BJ (cell line): ENCODE measurements at regions of chr22 and their contacts with region 1.

Region 1: GRCh38 chr22:26643418-26644100 is 13.8 kb upstream of the MIAT start:
- DNase-seq: no peak
- H3K4me3 ChIP-seq: no peak overlapping the region
- H3K27me3 ChIP-seq: peaks cover 8% of the 10 kb centered on the region
- CTCF ChIP-seq: no peak

Region 2: DNA sequence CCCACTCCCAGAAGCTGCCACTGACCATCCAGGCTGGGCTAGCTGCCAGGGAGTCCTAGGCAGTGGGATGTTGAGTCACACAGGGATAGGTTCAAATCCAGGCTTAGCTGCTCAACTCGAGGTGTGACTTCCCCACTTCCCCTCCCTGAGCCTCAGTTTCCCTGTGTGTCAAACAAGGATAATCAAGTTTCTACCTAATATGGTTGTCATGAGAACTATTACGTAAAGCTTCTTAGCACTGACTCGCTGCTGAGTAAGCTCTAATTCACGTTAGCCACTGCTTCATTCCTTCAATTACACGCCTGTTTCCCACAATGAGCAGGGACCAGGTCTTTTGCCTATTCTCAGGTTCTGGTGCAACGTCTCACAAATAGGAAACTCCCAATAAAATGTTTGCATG is 406.6 kb before region 1 on chr22:
- CTCF ChIA-PET with region 1: no interaction called
- POLR2A ChIA-PET with region 1: no interaction called
- DNase-seq: no peak
- H3K4me3 ChIP-seq: no peak overlapping the region
- H3K27me3 ChIP-seq: no peaks in the 10 kb centered on the region
- CTCF ChIP-seq: no peak

Region 3: DNA sequence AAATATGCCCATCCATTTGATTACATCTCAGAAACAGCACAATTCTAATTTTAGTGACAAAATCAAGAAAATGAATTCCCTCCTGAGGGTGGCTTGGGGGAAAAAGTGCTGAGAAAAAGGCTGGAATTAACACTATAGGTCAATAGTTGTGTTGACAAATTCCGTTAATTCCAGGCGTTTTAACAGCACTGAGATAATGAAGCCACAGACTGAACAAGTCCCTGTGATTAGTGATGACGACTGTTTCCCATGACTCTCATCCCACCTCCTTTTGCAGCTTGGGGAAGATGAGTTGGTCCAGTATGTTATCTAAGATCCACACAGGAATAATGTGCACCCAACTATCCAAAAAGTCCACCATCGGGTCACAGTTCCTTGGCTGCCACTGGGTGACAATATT is 147.1 kb before region 1 on chr22:
- CTCF ChIA-PET with region 1: interaction called, 4 read pairs
- POLR2A ChIA-PET with region 1: interaction called, 13 read pairs
- DNase-seq: no peak
- H3K4me3 ChIP-seq: no peak overlapping the region
- H3K27me3 ChIP-seq: no peaks in the 10 kb centered on the region
- CTCF ChIP-seq: no peak

Region 4: GRCh38 chr22:26629988-26630761 is 13.4 kb before region 1 on chr22:
- CTCF ChIA-PET with region 1: no interaction called
- POLR2A ChIA-PET with region 1: no interaction called
- DNase-seq: no peak
- H3K4me3 ChIP-seq: no peak overlapping the region
- H3K27me3 ChIP-seq: peaks cover 3% of the 10 kb centered on the region; the same call in 1 of the 2 replicates
- CTCF ChIP-seq: no peak

Region 5: DNA sequence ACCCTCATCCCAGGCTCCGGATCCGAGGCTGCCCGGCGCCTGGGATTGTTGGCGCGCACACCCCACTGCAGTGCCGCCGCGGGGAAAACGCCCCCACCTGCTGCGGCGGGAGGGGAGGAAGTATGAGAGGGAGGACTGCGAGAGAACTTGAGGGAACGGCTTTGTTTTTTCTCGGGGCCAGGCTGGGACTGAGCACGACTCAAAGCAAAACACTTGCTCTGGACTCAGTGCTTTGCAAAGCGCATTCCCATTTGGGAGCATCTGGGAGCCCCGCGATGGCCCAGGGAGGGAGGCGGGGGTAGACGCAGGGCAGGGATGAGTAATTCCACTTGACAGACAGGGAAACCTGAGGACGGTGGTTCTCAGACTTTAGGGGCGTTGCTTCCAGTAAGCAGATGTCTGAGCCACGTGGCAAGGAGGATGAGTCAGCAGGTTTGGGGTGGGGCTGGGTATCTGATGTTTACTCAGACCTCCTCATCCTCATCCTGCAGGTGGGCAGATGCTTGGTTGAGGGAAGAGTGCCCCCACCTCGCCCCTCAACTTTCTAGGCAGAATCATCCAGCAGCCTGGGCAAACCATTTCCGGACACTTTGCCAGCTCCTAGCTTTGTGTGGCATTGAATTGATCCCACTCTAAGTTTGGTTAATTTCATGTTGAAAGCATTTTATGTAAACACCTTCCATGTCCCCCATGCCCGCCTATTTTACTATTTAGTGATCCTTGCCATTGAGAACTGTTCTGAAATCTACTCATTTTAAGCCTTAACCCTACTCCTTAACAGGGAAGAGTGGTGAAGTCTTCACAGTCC is 15.3 kb after region 1 on chr22:
- CTCF ChIA-PET with region 1: no interaction called
- POLR2A ChIA-PET with region 1: no interaction called
- DNase-seq: peak; percentile 76
- H3K4me3 ChIP-seq: peak overlapping the region; percentile 28
- H3K27me3 ChIP-seq: peaks cover 15% of the 10 kb centered on the region
- CTCF ChIP-seq: no peak